Caco-2 (cell line): ENCODE measurements at regions of chr22 and their contacts with region 1.

Region 1: GRCh38 chr22:21641789-21642583 is at the start of gene SDF2L1:
- DNase-seq: peak; percentile 98 to 99
- H3K4me3 ChIP-seq: peak within 1 kb of the TSS; percentile 96
- H3K4me3 Mint-ChIP-seq: peak within 1 kb of the TSS; percentile 80
- H3K27ac Mint-ChIP-seq: peak within 1 kb of the TSS; percentile 85
- H3K4me1 ChIP-seq: peaks cover 29% of the 10 kb centered on the region
- H3K4me1 Mint-ChIP-seq: peaks cover 19% of the 10 kb centered on the region
- H3K27me3 ChIP-seq: no peaks in the 10 kb centered on the region
- H3K27me3 Mint-ChIP-seq: no peaks in the 10 kb centered on the region
- CTCF ChIP-seq: no peak
- total RNA-seq, gene SDF2L1: 48.5 and 49.6 TPM in 2 replicates

Region 2: DNA sequence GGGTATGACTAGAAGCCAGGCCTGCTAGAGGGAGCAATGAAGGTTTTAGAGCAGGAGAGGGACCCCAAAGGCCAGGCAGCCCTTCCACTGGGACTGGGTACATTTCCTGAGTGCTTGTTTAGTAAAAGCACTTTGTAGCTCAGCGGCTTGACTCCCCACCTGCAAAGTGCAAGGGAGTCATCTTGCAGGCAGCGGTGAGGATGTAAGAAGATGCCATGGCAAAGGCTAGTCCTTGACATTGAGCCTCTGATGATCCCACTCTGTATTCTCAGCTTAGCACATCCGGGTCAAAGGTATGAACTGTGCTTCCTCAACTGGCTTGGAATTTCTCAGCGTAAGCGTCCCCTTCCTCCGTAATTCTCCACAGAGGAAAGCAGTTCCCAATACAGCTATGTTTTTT is 77.6 kb before region 1 on chr22:
- CTCF ChIA-PET with region 1: no interaction called
- POLR2A ChIA-PET with region 1: no interaction called
- intact Hi-C with region 1: no loop called
- DNase-seq: no peak
- H3K4me3 ChIP-seq: no peak overlapping the region
- H3K4me3 Mint-ChIP-seq: no peak overlapping the region
- H3K27ac Mint-ChIP-seq: peak overlapping the region; percentile 46
- H3K4me1 ChIP-seq: peaks cover 6% of the 10 kb centered on the region
- H3K4me1 Mint-ChIP-seq: peaks cover 4% of the 10 kb centered on the region
- H3K27me3 ChIP-seq: no peaks in the 10 kb centered on the region
- H3K27me3 Mint-ChIP-seq: peaks cover 3% of the 10 kb centered on the region
- CTCF ChIP-seq: no peak

Region 3: DNA sequence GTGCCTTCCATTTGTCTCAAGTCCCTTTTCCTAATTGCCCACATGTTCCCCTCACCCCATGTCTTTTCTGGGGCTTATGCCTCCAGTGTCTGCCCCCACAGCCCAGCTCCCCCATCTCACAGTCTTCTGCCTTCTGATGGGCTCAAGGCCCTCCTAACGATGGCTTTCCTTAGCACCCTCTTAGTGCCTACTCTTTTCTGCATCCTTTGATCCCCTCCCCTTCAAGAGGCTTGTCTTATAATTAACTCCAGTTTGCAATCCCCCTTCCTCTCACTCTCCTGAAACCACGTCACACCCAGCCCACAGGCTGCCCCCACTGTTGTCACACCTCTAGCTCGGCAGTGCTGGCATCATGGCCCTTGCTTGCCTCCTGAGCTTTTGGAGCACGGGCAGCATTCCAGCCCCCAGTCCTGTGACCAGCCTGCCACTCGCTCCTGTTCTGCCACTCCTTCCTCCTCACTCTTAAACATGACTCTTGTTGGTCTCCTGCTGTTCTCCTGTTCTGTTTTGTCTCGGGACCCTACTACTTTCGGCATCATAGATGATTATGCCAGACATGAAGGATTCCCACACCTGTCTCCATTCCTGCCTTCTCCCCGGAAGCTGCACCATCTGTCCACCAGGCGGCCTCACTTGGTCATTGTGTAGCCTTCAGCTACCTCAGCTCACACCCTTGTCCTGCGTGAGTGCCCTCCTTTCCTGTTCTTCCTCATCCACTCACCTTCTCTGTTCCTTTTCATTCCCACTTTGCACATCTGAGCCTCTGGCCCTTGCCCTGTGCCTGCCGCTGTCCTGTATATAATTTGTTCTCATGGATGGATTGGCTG is 48.4 kb before region 1 on chr22:
- CTCF ChIA-PET with region 1: interaction called, 17 read pairs
- POLR2A ChIA-PET with region 1: no interaction called
- intact Hi-C with region 1: no loop called
- DNase-seq: peak; percentile 44 to 48
- H3K4me3 ChIP-seq: no peak overlapping the region
- H3K4me3 Mint-ChIP-seq: no peak overlapping the region
- H3K27ac Mint-ChIP-seq: peak overlapping the region; percentile 16
- H3K4me1 ChIP-seq: 0 out of 2 replicates have a peak, but pooled peaks cover 3% of the 10 kb centered on the region
- H3K4me1 Mint-ChIP-seq: no peaks in the 10 kb centered on the region
- H3K27me3 ChIP-seq: no peaks in the 10 kb centered on the region
- H3K27me3 Mint-ChIP-seq: no peaks in the 10 kb centered on the region
- CTCF ChIP-seq: peak; percentile 44 to 67

Region 4: DNA sequence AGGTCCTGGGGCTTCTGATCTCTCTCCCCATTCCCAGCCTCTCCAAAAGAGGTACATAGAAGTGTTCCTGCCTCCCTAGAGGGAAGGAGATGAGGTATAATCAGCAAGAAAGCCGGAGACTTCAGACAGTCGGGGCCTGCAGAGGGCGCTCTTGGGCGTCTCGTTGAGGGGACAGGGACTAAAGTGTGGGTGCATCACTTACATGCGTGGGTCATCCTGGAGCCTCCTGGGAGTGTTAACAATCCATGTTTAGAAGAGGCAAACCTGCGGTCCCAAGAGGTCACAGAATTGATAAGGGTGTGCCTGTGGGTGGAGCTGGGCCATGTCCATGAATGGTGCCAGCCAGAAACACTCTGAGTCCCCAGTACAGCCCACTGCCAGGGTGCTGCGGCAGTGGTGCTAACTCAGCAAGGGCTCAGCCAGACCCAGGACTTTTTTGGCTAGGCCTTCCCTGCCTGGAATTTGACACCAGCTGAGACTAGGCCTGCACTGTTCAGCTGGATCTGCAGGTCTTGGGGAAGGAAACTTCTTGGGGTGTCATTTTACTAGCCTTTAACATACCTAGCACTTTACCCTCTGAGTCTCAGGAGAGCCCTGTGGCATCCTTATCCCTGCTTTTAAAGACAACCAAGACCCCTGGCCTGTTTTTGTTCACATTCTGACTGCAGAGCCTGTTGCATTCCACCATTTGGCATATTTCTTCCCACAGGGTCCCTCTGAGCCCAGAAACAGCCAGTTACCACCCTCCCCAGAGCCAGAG is 17.7 kb before region 1 on chr22:
- CTCF ChIA-PET with region 1: interaction called, 179 read pairs
- POLR2A ChIA-PET with region 1: interaction called, 81 read pairs
- intact Hi-C with region 1: no loop called
- DNase-seq: peak in 1 of 2 experiments; percentile 65
- H3K4me3 ChIP-seq: no peak overlapping the region
- H3K4me3 Mint-ChIP-seq: no peak overlapping the region
- H3K27ac Mint-ChIP-seq: peak overlapping the region; percentile 72
- H3K4me1 ChIP-seq: peaks cover 5% of the 10 kb centered on the region; the same call in 1 of the 2 replicates
- H3K4me1 Mint-ChIP-seq: peaks cover 11% of the 10 kb centered on the region
- H3K27me3 ChIP-seq: no peaks in the 10 kb centered on the region
- H3K27me3 Mint-ChIP-seq: no peaks in the 10 kb centered on the region
- CTCF ChIP-seq: peak; percentile 42 to 63

Region 5: DNA sequence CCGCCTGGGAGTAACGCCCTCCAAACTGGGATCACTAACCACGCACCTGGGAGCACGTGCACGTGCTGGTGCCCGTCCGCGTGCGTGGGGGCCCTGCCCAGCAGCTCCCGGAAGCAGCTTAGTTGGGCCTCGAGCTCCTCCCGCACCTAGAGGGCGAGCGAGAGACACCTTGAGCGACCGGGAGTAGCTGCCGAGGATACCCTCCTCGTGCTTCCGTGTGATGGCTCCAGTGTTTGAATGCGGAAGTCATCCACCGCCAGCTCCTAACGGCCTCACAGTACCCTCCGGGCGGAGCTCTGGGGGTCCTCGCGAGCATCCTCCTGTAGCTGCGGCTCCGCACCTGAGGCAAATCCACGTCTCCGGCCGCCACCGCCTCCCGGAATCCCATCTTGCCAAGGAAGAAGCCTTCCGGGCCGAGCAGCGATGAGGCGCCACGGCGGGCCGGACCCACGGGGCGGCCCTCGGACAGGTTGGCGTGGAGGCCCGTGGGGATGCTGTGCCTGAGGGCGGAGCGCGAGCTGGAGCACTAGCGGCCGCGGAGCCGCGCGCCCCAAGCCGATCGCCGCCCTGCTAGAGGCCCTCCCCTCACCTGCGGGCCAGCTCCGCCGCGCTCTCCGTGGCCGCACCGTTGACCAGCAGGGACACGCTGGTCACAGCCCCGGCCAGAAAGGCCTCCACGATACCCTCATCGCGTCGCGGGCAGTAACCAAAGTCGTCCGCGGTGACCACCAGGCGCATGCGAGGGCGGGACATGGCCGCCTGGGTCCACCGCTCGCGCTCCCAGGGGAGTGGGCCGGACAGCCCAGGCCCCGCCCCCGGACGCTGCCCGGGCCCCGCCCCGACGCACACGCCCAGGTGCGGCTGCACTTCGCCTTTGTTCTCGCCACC is 12.5 kb before region 1 on chr22 and contains the start of gene YDJC:
- CTCF ChIA-PET with region 1: interaction called, 179 read pairs
- POLR2A ChIA-PET with region 1: interaction called, 81 read pairs
- intact Hi-C with region 1: loop called (anchors 1 kb)
- DNase-seq: peak; percentile 96 to 97
- H3K4me3 ChIP-seq: peak within 1 kb of the TSS; percentile 67
- H3K4me3 Mint-ChIP-seq: peak within 1 kb of the TSS; percentile 79
- H3K27ac Mint-ChIP-seq: peak within 1 kb of the TSS; percentile 84
- H3K4me1 ChIP-seq: peaks cover 5% of the 10 kb centered on the region; the same call in 1 of the 2 replicates
- H3K4me1 Mint-ChIP-seq: no peaks in the 10 kb centered on the region
- H3K27me3 ChIP-seq: no peaks in the 10 kb centered on the region
- H3K27me3 Mint-ChIP-seq: no peaks in the 10 kb centered on the region
- CTCF ChIP-seq: peak; percentile 49 to 79
- total RNA-seq, gene YDJC: 55.9 and 60.0 TPM in 2 replicates

Region 6: GRCh38 chr22:21652010-21652546 is 10.1 kb after region 1 on chr22:
- CTCF ChIA-PET with region 1: interaction called, 23 read pairs
- POLR2A ChIA-PET with region 1: interaction called, 15 read pairs
- intact Hi-C with region 1: no loop called
- DNase-seq: peak; percentile 92 to 93
- H3K4me3 ChIP-seq: peak overlapping the region; percentile 58
- H3K4me3 Mint-ChIP-seq: peak overlapping the region; percentile 80
- H3K27ac Mint-ChIP-seq: peak overlapping the region; percentile 81
- H3K4me1 ChIP-seq: peaks cover 20% of the 10 kb centered on the region
- H3K4me1 Mint-ChIP-seq: peaks cover 19% of the 10 kb centered on the region
- H3K27me3 ChIP-seq: no peaks in the 10 kb centered on the region
- H3K27me3 Mint-ChIP-seq: no peaks in the 10 kb centered on the region
- CTCF ChIP-seq: no peak

Region 7: GRCh38 chr22:21657361-21658032 is 15.5 kb after region 1 on chr22:
- CTCF ChIA-PET with region 1: interaction called, 23 read pairs
- POLR2A ChIA-PET with region 1: interaction called, 15 read pairs
- intact Hi-C with region 1: no loop called
- DNase-seq: peak; percentile 89 to 92
- H3K4me3 ChIP-seq: peak overlapping the region; percentile 67
- H3K4me3 Mint-ChIP-seq: peak overlapping the region; percentile 77
- H3K27ac Mint-ChIP-seq: peak overlapping the region; percentile 78
- H3K4me1 ChIP-seq: peaks cover 21% of the 10 kb centered on the region
- H3K4me1 Mint-ChIP-seq: peaks cover 13% of the 10 kb centered on the region
- H3K27me3 ChIP-seq: no peaks in the 10 kb centered on the region
- H3K27me3 Mint-ChIP-seq: no peaks in the 10 kb centered on the region
- CTCF ChIP-seq: peak; percentile 31